ENCODE measurements at regions of chr22 and their contacts with region 1.

Region 1: GRCh38 chr22:34414484-34415440 is 494.5 kb upstream of the LARGE1 start:
- DNase-seq: peak; percentile 62 to 67
- H3K4me3 ChIP-seq: no peak overlapping the region
- H3K27ac ChIP-seq: no peak overlapping the region
- H3K4me1 ChIP-seq: no peaks in the 10 kb centered on the region
- H3K27me3 ChIP-seq: no peaks in the 10 kb centered on the region
- CTCF ChIP-seq: peak; percentile 82

Region 2: DNA sequence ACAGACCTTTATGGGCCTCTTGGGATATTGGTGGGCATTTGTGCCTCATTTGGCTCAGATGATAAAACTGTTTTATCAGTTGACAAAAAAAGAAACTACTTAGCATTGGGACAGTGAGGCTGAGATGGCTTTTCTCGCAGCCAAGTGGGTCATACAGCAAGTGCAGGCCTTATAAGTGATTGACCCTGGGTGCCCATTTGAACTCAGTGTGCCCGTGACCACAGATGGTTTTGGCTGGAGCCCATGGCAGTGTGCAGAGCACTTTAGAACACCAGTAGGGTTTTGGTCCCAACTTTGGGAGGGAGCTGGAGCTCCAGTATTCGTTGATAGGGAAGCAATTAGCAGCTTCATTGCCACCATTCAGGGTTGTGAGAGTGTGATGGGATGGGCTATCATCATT is 90.0 kb before region 1 on chr22:
- CTCF ChIA-PET with region 1: no interaction called
- POLR2A ChIA-PET with region 1: no interaction called
- intact Hi-C with region 1: no loop called
- DNase-seq: no peak
- H3K4me3 ChIP-seq: no peak overlapping the region
- H3K27ac ChIP-seq: no peak overlapping the region
- H3K4me1 ChIP-seq: no peaks in the 10 kb centered on the region
- H3K27me3 ChIP-seq: peaks cover 7% of the 10 kb centered on the region
- CTCF ChIP-seq: no peak

Region 3: GRCh38 chr22:35023692-35024363 is 609.1 kb after region 1 on chr22:
- CTCF ChIA-PET with region 1: no interaction called
- POLR2A ChIA-PET with region 1: no interaction called
- intact Hi-C with region 1: loop called (anchors 1 kb)
- DNase-seq: peak; percentile 44 to 56
- H3K4me3 ChIP-seq: no peak overlapping the region
- H3K27ac ChIP-seq: no peak overlapping the region
- H3K4me1 ChIP-seq: no peaks in the 10 kb centered on the region
- H3K27me3 ChIP-seq: peaks cover 23% of the 10 kb centered on the region; the same call in 1 of the 2 replicates
- CTCF ChIP-seq: peak; percentile 99

Region 4: GRCh38 chr22:35150183-35151107 is 735.7 kb after region 1 on chr22:
- CTCF ChIA-PET with region 1: interaction called, 3 read pairs
- POLR2A ChIA-PET with region 1: no interaction called
- intact Hi-C with region 1: loop called (anchors 1 kb)
- DNase-seq: peak in 1 of 2 experiments; percentile 53
- H3K4me3 ChIP-seq: no peak overlapping the region
- H3K27ac ChIP-seq: no peak overlapping the region
- H3K4me1 ChIP-seq: no peaks in the 10 kb centered on the region
- H3K27me3 ChIP-seq: peaks cover 43% of the 10 kb centered on the region
- CTCF ChIP-seq: peak; percentile 91